ENCODE measurements at regions of chr6 and their contacts with region 1.

Region 1: DNA sequence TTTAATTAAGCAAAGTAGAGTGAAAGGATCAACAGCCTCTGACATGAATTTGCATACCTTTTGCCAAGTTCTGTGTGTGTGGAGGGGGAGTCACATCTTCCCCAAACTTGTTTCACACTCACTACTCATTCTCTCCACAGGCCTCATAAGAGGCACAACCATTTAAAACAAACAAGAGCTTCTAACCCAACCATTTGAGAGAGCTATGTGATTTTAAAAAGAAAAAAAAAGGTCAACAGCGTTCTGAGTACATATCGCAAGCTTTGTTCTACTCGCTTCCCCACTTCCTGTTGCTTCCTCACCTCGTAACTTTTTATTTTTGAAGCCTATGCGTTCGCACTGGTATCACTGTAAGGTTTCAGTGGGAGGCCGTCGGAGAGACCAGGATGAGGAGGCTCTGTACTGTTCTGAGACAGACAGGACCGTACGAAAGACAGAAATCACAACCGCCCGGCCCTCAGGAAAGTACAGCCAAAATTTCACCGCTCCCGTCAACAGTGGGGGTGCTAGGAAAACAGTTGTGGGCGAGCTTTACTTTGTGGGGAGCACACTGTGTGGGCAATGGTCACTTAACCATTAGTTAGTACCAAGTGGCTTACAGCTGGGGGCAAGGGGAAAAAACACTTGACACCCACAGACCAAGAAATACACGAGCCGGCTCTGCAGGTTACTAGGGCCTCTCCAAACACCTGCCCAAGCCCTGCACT is 61.3 kb downstream of the TRERF1 start:
- DNase-seq: peak; percentile 22 to 88 (median 62)
- ATAC-seq: peak; percentile 77
- H3K4me3 ChIP-seq: peak overlapping the region; percentile 10 to 31
- H3K4me3 Mint-ChIP-seq: peak overlapping the region; percentile 80
- H3K27ac ChIP-seq: peak overlapping the region; percentile 74 to 86
- H3K27ac Mint-ChIP-seq: peak overlapping the region; percentile 100
- H3K4me1 ChIP-seq: peaks cover 99% of the 10 kb centered on the region
- H3K4me1 Mint-ChIP-seq: peaks cover 97% of the 10 kb centered on the region
- H3K27me3 ChIP-seq: no peaks in the 10 kb centered on the region
- H3K27me3 Mint-ChIP-seq: no peaks in the 10 kb centered on the region
- CTCF ChIP-seq: no peak

Region 2: GRCh38 chr6:42279144-42279781 is 111.1 kb before region 1 on chr6:
- CTCF ChIA-PET with region 1: interaction called, 5 read pairs
- POLR2A ChIA-PET with region 1: interaction called, 17 read pairs
- intact Hi-C with region 1: loop called in 1 of 2 experiments (anchors 5 kb)
- DNase-seq: peak in 7 of 9 experiments; percentile 27 to 74 (median 50)
- ATAC-seq: peak; percentile 10
- H3K4me3 ChIP-seq: no peak overlapping the region
- H3K4me3 Mint-ChIP-seq: peak overlapping the region; percentile 64
- H3K27ac ChIP-seq: peak overlapping the region; percentile 59 to 72
- H3K27ac Mint-ChIP-seq: peak overlapping the region; percentile 88
- H3K4me1 ChIP-seq: peaks cover 54% of the 10 kb centered on the region
- H3K4me1 Mint-ChIP-seq: peaks cover 52% of the 10 kb centered on the region
- H3K27me3 ChIP-seq: no peaks in the 10 kb centered on the region
- H3K27me3 Mint-ChIP-seq: no peaks in the 10 kb centered on the region
- CTCF ChIP-seq: no peak

Region 3: DNA sequence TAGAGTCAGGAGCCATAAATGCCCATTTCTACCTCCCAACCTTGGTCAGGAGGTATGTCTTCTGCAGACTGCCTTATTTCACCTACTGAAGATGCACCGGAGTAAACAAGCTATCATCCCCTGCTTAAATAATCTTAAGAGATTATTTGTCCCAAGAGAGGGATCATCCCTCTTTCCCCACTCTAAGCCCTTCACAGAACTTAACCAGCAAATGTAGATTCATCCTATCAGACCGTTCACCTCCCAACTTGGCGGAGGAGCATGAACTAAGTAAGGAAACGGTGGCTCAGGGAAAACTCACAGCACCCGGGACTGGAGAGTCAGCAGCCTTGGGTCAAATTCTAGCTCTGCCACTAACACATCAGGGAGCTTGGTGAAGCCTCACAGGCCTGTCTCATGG is 54.0 kb before region 1 on chr6:
- CTCF ChIA-PET with region 1: no interaction called
- POLR2A ChIA-PET with region 1: no interaction called
- intact Hi-C with region 1: no loop called
- DNase-seq: no peak
- ATAC-seq: no peak
- H3K4me3 ChIP-seq: no peak overlapping the region
- H3K4me3 Mint-ChIP-seq: no peak overlapping the region
- H3K27ac ChIP-seq: no peak overlapping the region
- H3K27ac Mint-ChIP-seq: peak overlapping the region; percentile 27
- H3K4me1 ChIP-seq: no peaks in the 10 kb centered on the region
- H3K4me1 Mint-ChIP-seq: peaks cover 49% of the 10 kb centered on the region
- H3K27me3 ChIP-seq: no peaks in the 10 kb centered on the region
- H3K27me3 Mint-ChIP-seq: no peaks in the 10 kb centered on the region
- CTCF ChIP-seq: no peak

Region 4: GRCh38 chr6:42374018-42374659 is 16.2 kb before region 1 on chr6:
- CTCF ChIA-PET with region 1: interaction called, 10 read pairs
- POLR2A ChIA-PET with region 1: interaction called, 60 read pairs
- intact Hi-C with region 1: loop called in 1 of 2 experiments (anchors 2 kb)
- DNase-seq: peak in 4 of 9 experiments; percentile 25 to 61 (median 45)
- ATAC-seq: peak; percentile 68
- H3K4me3 ChIP-seq: no peak overlapping the region
- H3K4me3 Mint-ChIP-seq: peak overlapping the region; percentile 53
- H3K27ac ChIP-seq: peak overlapping the region in 1 of 2 experiments; percentile 57
- H3K27ac Mint-ChIP-seq: peak overlapping the region; percentile 93
- H3K4me1 ChIP-seq: peaks cover 64% of the 10 kb centered on the region
- H3K4me1 Mint-ChIP-seq: peaks cover 73% of the 10 kb centered on the region
- H3K27me3 ChIP-seq: no peaks in the 10 kb centered on the region
- H3K27me3 Mint-ChIP-seq: no peaks in the 10 kb centered on the region
- CTCF ChIP-seq: no peak

Region 5: GRCh38 chr6:42423244-42423643 is 32.9 kb after region 1 on chr6:
- CTCF ChIA-PET with region 1: interaction called, 7 read pairs
- POLR2A ChIA-PET with region 1: interaction called, 14 read pairs
- intact Hi-C with region 1: loop called in 1 of 2 experiments (anchors 5 kb)
- DNase-seq: peak in 5 of 9 experiments; percentile 15 to 59 (median 43)
- ATAC-seq: peak; percentile 53
- H3K4me3 ChIP-seq: no peak overlapping the region
- H3K4me3 Mint-ChIP-seq: peak overlapping the region; percentile 81
- H3K27ac ChIP-seq: peak overlapping the region in 1 of 2 experiments; percentile 5
- H3K27ac Mint-ChIP-seq: peak overlapping the region; percentile 86
- H3K4me1 ChIP-seq: peaks cover 30% of the 10 kb centered on the region
- H3K4me1 Mint-ChIP-seq: peaks cover 67% of the 10 kb centered on the region
- H3K27me3 ChIP-seq: no peaks in the 10 kb centered on the region
- H3K27me3 Mint-ChIP-seq: no peaks in the 10 kb centered on the region
- CTCF ChIP-seq: no peak

Region 6: DNA sequence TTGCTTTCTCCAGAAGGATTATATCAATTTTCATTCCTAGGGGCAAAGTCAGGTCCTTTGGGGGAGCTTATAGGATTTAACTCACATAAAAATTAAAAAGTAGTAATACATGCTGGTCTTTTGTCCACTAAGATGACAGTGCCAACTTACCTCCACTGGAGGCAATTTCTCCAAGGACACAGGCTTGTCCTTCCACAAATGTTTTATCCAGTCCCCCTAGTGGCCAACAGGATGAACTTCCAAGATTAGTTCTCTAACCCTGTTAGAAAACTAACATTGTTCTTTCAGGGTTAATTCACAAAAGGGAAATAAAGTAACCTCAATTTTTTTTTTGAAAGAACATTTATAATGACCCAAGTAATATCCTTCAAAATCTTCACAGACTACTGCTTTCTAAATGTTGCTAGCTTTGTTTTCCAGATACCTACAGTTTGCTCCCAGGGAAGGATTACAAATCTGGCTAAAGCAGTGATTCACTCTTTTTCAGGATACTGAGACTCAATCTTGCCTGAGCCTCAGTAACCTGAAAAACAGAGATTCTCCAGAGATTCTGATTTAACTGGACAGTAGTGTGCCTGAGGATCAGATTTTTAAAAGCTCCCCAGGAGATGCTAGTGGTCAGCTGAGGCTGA is 141.8 kb after region 1 on chr6:
- CTCF ChIA-PET with region 1: interaction called, 15 read pairs
- POLR2A ChIA-PET with region 1: no interaction called
- intact Hi-C with region 1: loop called in 1 of 2 experiments (anchors 5 kb)
- DNase-seq: peak in 4 of 9 experiments; percentile 14 to 72 (median 36)
- ATAC-seq: no peak
- H3K4me3 ChIP-seq: no peak overlapping the region
- H3K4me3 Mint-ChIP-seq: no peak overlapping the region
- H3K27ac ChIP-seq: no peak overlapping the region
- H3K27ac Mint-ChIP-seq: no peak overlapping the region
- H3K4me1 ChIP-seq: no peaks in the 10 kb centered on the region
- H3K4me1 Mint-ChIP-seq: no peaks in the 10 kb centered on the region
- H3K27me3 ChIP-seq: no peaks in the 10 kb centered on the region
- H3K27me3 Mint-ChIP-seq: no peaks in the 10 kb centered on the region
- CTCF ChIP-seq: peak; percentile 80

Region 7: GRCh38 chr6:43769526-43770416 is 1379.4 kb after region 1 on chr6 and contains the start of gene VEGFA:
- CTCF ChIA-PET with region 1: no interaction called
- POLR2A ChIA-PET with region 1: no interaction called
- intact Hi-C with region 1: no loop called
- DNase-seq: peak; percentile 72 to 92 (median 90)
- ATAC-seq: peak; percentile 80
- H3K4me3 ChIP-seq: peak within 1 kb of the TSS; percentile 64 to 88
- H3K4me3 Mint-ChIP-seq: peak within 1 kb of the TSS; percentile 92
- H3K27ac ChIP-seq: peak within 1 kb of the TSS in 1 of 2 experiments; percentile 27
- H3K27ac Mint-ChIP-seq: peak within 1 kb of the TSS; percentile 23
- H3K4me1 ChIP-seq: peaks cover 6% of the 10 kb centered on the region
- H3K4me1 Mint-ChIP-seq: peaks cover 13% of the 10 kb centered on the region
- H3K27me3 ChIP-seq: peaks cover 0 to 20% of the 10 kb centered on the region in 2 experiments
- H3K27me3 Mint-ChIP-seq: peaks cover 28% of the 10 kb centered on the region
- CTCF ChIP-seq: peak; percentile 96
- total RNA-seq, gene VEGFA: 4.6 to 5.3 TPM

Measured in CD8-positive, alpha-beta T cell (primary cell).